ENCODE measurements at regions of chr9 and their contacts with region 1.

Region 1: DNA sequence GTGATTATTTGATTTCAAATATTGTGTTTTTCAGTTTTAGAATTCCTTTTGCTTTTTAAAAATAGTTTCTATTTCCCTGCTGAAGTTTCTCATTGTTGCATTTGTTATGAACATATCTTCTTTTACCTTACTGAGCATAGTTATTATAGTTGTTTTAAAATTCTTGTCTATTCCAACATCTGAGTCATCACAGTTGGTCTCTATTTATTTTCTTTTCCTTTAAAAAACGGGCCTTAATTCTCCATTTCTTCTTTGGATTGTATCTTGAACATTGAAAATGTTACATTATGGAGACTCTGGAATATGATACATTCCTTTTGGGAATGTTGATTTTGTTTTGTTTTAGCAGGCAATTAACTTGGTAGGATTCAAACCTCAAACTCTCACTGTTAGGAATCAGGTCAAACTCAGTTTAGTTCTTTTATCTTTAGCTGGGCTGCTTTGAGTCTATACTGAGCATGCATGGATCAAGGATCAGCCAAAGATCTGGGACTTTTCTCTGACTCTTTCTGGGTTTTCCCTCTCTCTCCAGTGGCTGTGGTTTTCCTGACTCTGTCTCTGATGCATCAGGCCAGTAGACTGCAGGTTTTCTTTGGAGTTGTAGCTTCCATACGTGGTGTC is 70.3 kb downstream of the TEK start:
- DNase-seq: no peak
- H3K4me3 ChIP-seq: no peak overlapping the region
- H3K27ac ChIP-seq: no peak overlapping the region
- H3K4me1 ChIP-seq: no peaks in the 10 kb centered on the region
- H3K27me3 ChIP-seq: no peaks in the 10 kb centered on the region
- CTCF ChIP-seq: no peak
- POLR2A ChIP-seq: no peak

Region 2: GRCh38 chr9:26983340-26983739 is 196.0 kb before region 1 on chr9:
- intact Hi-C with region 1: no loop called
- DNase-seq: no peak
- H3K4me3 ChIP-seq: no peak overlapping the region
- H3K27ac ChIP-seq: no peak overlapping the region
- H3K4me1 ChIP-seq: no peaks in the 10 kb centered on the region
- H3K27me3 ChIP-seq: no peaks in the 10 kb centered on the region
- CTCF ChIP-seq: no peak
- POLR2A ChIP-seq: no peak

Region 3: GRCh38 chr9:27564670-27565069 is 385.3 kb after region 1 on chr9:
- intact Hi-C with region 1: loop called (anchors 5 kb)
- DNase-seq: no peak
- H3K4me3 ChIP-seq: no peak overlapping the region
- H3K27ac ChIP-seq: no peak overlapping the region
- H3K4me1 ChIP-seq: no peaks in the 10 kb centered on the region
- H3K27me3 ChIP-seq: no peaks in the 10 kb centered on the region
- CTCF ChIP-seq: no peak
- POLR2A ChIP-seq: no peak